Ovary (tissue), 10 donors: ENCODE measurements at regions of chr6 and their contacts with region 1.

Region 1: DNA sequence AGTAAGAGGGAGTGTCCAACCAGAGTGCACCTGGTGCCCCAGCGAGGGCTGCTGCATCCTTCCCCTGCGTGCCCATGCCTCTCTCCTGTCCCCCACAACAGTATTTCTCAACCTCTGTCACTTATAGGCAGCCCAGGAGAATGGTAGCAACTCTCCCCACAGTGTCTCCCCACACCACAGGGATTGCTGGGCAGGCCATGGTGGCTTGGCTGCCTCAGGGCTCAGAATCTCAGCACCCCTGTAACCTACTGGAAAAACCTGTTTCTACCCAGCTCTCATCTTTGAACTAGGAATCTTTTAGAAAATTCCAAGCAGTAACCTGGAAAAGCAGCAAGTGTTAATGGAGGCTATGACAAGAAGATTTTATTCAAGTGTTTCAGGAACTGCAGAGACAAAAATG is 38.1 kb downstream of the CD164 start:
- DNase-seq: no peak
- H3K4me3 ChIP-seq: no peak overlapping the region
- H3K27ac ChIP-seq: no peak overlapping the region
- H3K4me1 ChIP-seq: no peaks in the 10 kb centered on the region
- H3K27me3 ChIP-seq: no peaks in the 10 kb centered on the region
- CTCF ChIP-seq: no peak
- EP300 ChIP-seq: no peak
- POLR2A ChIP-seq: no peak

Region 2: GRCh38 chr6:109212683-109213082 is 131.5 kb before region 1 on chr6:
- intact Hi-C with region 1: no loop called
- DNase-seq: no peak
- H3K4me3 ChIP-seq: no peak overlapping the region
- H3K27ac ChIP-seq: no peak overlapping the region
- H3K4me1 ChIP-seq: no peaks in the 10 kb centered on the region
- H3K27me3 ChIP-seq: no peaks in the 10 kb centered on the region
- CTCF ChIP-seq: no peak
- EP300 ChIP-seq: no peak
- POLR2A ChIP-seq: no peak

Region 3: GRCh38 chr6:109411034-109411433 is 66.8 kb after region 1 on chr6:
- intact Hi-C with region 1: loop called in 1 of 4 experiments (anchors 5 kb)
- DNase-seq: no peak
- H3K4me3 ChIP-seq: no peak overlapping the region
- H3K27ac ChIP-seq: no peak overlapping the region
- H3K4me1 ChIP-seq: no peaks in the 10 kb centered on the region
- H3K27me3 ChIP-seq: no peaks in the 10 kb centered on the region
- CTCF ChIP-seq: no peak
- EP300 ChIP-seq: no peak
- POLR2A ChIP-seq: no peak